Heart left ventricle (tissue), 16 donors: ENCODE measurements at regions of chr19 and their contacts with region 1.

Region 1: GRCh38 chr19:38729653-38730469 is 14.4 kb downstream of the CAPN12 start:
- DNase-seq: peak; percentile 58 to 87 (median 78)
- ATAC-seq: peak; percentile 33 to 47 (median 38)
- H3K4me3 ChIP-seq: no peak overlapping the region
- H3K27ac ChIP-seq: peak overlapping the region in 10 of 12 donors; percentile 45 to 80 (median 74)
- H3K4me1 ChIP-seq: peaks cover 7 to 67% (median 40%) of the 10 kb centered on the region in 12 donors
- H3K27me3 ChIP-seq: no peaks in the 10 kb centered on the region
- CTCF ChIP-seq: peak; percentile 66 to 90 (median 76)
- POLR2A ChIP-seq: no peak

Region 2: DNA sequence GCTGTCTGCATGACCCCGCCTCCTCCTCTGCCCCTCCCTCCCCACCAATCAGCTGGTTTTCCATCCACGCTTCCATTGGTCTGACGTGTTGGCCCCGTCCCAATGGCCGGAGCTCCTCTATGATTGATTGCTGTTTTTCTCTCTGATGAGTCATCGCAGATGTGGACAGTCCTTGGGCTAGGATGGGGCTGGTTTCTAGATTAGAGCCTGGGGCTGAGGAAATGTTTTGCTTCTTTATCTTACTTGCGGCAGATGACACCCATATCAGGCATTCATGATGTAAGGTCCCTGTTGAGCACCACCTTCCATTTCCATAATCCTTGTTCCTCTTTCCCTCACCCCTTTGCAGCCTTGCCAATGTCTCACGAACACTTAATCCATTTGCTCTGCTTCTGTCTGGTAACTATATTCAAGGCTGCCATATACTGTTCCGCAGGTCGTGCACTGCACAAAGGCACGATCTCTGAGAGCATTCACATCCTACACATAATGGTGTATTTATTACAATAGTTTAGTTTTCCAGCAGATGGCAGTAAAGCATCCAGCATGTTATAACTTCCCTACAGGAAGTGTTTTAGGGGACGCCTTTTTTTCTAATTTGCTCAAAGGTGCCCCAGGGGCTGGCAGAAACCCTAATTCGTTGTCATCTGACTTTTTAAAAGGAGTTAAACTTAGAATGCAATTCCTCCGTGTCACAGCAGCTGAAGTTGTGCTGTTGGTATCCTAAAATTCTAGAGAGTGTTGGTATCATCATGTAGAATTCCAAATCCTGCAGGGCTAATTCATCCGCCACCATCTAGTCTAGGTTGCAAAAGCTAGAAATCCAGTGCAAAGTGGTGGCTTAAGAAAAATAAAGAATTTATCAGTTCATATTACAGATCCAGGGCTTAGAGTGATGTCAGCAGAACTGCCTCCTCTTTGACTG is 185.6 kb before region 1 on chr19:
- intact Hi-C with region 1: loop called in 1 of 10 experiments (anchors 10 kb)
- DNase-seq: peak in 4 of 5 donors; percentile 44 to 67 (median 55)
- ATAC-seq: peak; percentile 64 to 84 (median 83)
- H3K4me3 ChIP-seq: peak overlapping the region in 4 of 12 donors; percentile 9 to 44 (median 26)
- H3K27ac ChIP-seq: peak overlapping the region in 1 of 12 donors; percentile 14
- H3K4me1 ChIP-seq: peaks cover 0 to 14% (median 5%) of the 10 kb centered on the region in 12 donors
- H3K27me3 ChIP-seq: no peaks in the 10 kb centered on the region
- CTCF ChIP-seq: peak; percentile 43 to 69 (median 59)
- POLR2A ChIP-seq: no peak

Region 3: GRCh38 chr19:38676023-38676877 is 53.6 kb before region 1 on chr19:
- intact Hi-C with region 1: no loop called
- DNase-seq: peak in 3 of 5 donors; percentile 55 to 72 (median 65)
- ATAC-seq: peak; percentile 4 to 50 (median 6)
- H3K4me3 ChIP-seq: no peak overlapping the region
- H3K27ac ChIP-seq: peak overlapping the region; percentile 83 to 96 (median 90)
- H3K4me1 ChIP-seq: peaks cover 41 to 97% (median 88%) of the 10 kb centered on the region in 12 donors
- H3K27me3 ChIP-seq: no peaks in the 10 kb centered on the region
- CTCF ChIP-seq: peak in 1 of 12 donors; percentile 8
- POLR2A ChIP-seq: no peak

Region 4: DNA sequence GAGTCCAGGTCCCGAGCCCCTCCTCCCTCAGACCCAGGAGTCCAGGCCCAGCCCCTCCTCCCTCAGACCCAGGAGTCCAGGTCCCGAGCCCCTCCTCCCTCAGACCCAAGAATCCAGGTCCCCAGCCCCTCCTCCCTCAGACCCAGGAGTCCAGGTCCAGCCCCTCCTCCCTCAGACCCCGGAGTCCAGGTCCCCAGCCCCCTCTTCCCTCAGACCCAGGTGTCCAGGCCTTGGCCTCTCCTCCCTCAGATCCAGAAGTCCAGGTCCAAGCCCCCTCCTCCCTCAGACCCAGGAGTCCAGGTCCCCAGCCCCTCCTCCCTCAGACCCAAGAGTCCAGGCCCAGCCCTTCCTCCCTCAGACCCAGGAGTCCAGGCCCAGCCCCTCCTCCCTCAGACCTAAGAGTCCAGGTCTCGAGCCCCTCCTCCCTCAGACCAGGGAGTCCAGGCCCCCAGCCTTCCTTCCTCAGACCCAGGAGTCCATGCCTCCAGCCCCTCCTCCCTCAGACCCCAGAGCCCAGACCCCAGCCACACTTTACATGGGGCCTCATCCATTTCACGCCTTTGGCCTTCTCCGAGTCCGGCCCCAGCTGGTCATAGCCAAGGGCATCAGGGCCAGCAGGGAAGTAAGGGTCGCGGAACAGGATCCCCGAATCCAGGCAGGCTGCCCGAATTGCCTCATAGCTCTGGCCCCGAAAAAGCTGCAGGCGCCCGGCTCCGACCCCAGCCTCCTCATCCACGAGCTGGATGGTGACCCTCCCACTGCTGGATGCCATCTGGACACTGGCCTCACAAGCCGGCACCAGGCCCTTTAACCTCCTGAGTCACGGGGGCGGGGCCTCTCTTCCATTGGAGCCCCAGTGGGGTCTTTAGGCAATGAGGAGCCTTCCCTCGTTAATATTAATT is 13.8 kb after region 1 on chr19:
- intact Hi-C with region 1: no loop called
- DNase-seq: no peak
- ATAC-seq: no peak
- H3K4me3 ChIP-seq: no peak overlapping the region
- H3K27ac ChIP-seq: no peak overlapping the region
- H3K4me1 ChIP-seq: no peaks in the 10 kb centered on the region
- H3K27me3 ChIP-seq: no peaks in the 10 kb centered on the region
- CTCF ChIP-seq: no peak
- POLR2A ChIP-seq: no peak

Region 5: DNA sequence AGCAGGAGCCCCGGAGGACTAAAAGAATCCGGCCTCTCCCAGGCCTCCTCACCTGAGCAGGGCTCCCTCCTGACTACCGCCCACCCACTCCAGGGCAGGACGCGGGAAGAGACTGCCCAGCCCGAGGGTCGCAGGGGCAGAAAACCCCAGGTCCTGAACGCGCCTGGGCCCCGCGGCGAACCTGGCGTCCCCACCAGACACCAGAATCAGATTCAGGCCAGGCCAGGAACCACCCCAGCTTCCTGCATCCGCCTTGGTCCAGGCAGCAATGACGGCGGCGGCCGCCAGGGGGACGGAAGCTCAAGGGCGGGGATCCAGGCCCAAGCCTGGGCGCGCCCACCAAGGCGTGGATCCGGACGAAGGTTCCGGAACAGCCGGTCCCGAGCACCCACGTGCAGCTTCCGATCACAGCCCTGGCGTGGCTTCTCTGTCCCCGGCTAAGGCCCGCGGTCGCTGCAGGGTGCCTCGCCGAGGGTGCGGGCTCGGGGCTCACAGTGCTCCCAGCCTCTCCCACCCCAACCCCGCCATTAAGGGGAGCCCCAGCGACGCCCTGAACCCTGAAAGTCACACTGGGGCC is 39.9 kb after region 1 on chr19:
- intact Hi-C with region 1: loop called in 1 of 10 experiments (anchors 5 kb)
- DNase-seq: peak; percentile 90 to 98 (median 93)
- ATAC-seq: peak; percentile 81 to 95 (median 90)
- H3K4me3 ChIP-seq: peak overlapping the region in 10 of 12 donors; percentile 23 to 54 (median 37)
- H3K27ac ChIP-seq: peak overlapping the region in 10 of 12 donors; percentile 42 to 77 (median 56)
- H3K4me1 ChIP-seq: peaks cover 0 to 12% (median 2%) of the 10 kb centered on the region in 12 donors
- H3K27me3 ChIP-seq: no peaks in the 10 kb centered on the region
- CTCF ChIP-seq: peak; percentile 67 to 97 (median 86)
- POLR2A ChIP-seq: no peak

Region 6: GRCh38 chr19:38805180-38805579 is 75.3 kb after region 1 on chr19:
- intact Hi-C with region 1: loop called in 1 of 10 experiments (anchors 10 kb)
- DNase-seq: no peak
- ATAC-seq: peak in 3 of 4 donors; percentile 53 to 93 (median 61)
- H3K4me3 ChIP-seq: no peak overlapping the region
- H3K27ac ChIP-seq: peak overlapping the region in 5 of 12 donors; percentile 11 to 68 (median 20)
- H3K4me1 ChIP-seq: peaks cover 0 to 6% (median 0%) of the 10 kb centered on the region in 12 donors
- H3K27me3 ChIP-seq: no peaks in the 10 kb centered on the region
- CTCF ChIP-seq: no peak
- POLR2A ChIP-seq: no peak

Region 7: DNA sequence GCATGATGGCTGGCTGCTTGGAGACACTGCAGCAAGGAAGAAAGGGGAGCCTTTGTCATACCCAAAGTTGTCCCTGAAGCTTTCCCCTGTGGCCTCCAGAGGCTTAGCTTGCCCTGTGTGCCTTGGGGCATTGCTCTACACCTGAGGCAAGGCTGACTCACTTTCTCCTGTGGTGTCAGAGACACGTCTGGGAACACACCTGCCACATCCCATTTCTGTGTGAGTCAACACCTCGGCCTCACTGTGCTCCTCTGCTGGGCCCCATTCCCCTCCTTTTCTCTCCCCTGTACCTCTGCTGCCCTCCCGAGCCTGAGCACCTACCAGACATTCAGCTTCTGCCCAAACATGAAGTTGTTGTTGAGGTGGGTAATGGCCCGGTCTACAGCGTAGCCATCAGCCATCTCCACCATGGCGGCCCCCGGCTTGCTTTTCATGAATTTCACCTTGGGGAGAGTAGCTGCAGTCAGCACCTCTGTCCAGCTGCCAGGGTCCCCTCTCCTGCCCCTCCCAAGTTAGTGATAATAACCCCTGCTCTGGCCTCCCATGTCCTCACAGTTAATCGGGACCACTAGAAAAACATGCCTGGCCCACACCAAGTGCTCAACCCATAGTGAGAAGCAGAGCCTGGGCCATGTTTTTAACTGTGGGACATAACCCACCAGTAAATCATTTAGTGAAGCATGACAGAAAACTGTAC is 108.9 kb after region 1 on chr19:
- intact Hi-C with region 1: loop called in 3 of 10 experiments (anchors 5 to 10 kb)
- DNase-seq: no peak
- ATAC-seq: no peak
- H3K4me3 ChIP-seq: no peak overlapping the region
- H3K27ac ChIP-seq: peak overlapping the region in 1 of 12 donors; percentile 3
- H3K4me1 ChIP-seq: peaks cover 0 to 20% (median 1%) of the 10 kb centered on the region in 12 donors
- H3K27me3 ChIP-seq: no peaks in the 10 kb centered on the region
- CTCF ChIP-seq: no peak
- POLR2A ChIP-seq: no peak

Region 8: DNA sequence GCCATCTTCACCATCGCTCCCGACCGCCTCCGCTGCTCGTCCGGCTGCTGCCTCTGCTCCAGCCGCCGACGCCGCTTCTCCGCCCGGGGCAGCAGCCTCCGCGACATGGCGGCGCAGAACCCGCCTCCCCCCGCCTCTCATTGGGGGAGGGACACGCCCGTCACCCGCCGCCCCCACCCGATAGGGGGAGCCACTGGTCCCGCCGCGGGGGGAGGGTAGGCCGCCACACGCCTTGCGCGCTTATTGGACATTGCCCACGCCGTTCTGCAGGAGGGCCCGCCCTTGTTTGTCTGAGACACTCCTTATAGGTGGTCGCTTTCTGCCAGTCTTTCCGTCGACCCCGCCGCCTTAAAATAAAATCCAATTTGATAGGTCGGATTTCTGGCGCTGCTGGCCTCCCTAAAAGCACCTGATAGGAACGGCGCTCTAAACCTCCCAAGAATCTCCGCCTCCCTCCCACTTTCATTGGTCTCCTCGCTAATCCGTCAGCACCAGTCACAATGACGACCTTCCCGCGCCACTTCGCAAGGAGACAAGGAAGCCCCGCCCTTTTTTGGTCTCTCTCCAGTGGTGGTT is 120.1 kb after region 1 on chr19 and contains the start of gene HNRNPL:
- intact Hi-C with region 1: loop called in 2 of 10 experiments (anchors 5 to 10 kb)
- DNase-seq: peak; percentile 99 to 100 (median 100)
- ATAC-seq: peak; percentile 79 to 85 (median 81)
- H3K4me3 ChIP-seq: peak within 1 kb of the TSS; percentile 83 to 100 (median 95)
- H3K27ac ChIP-seq: peak within 1 kb of the TSS; percentile 99 to 100 (median 100)
- H3K4me1 ChIP-seq: peaks cover 9 to 59% (median 46%) of the 10 kb centered on the region in 12 donors
- H3K27me3 ChIP-seq: no peaks in the 10 kb centered on the region
- CTCF ChIP-seq: peak; percentile 21 to 81 (median 56)
- POLR2A ChIP-seq: peak; percentile 40 to 90
- total RNA-seq, gene HNRNPL: 93.6 to 256 (median 165) TPM